ENCODE measurements at regions of chr7 and their contacts with region 1.

Region 1: GRCh38 chr7:38796626-38797501 is 112.1 kb downstream of the VPS41 start:
- DNase-seq: no peak
- H3K4me3 ChIP-seq: no peak overlapping the region
- H3K27ac ChIP-seq: no peak overlapping the region
- H3K4me1 ChIP-seq: no peaks in the 10 kb centered on the region
- H3K27me3 ChIP-seq: no peaks in the 10 kb centered on the region
- CTCF ChIP-seq: peak; percentile 81

Region 2: DNA sequence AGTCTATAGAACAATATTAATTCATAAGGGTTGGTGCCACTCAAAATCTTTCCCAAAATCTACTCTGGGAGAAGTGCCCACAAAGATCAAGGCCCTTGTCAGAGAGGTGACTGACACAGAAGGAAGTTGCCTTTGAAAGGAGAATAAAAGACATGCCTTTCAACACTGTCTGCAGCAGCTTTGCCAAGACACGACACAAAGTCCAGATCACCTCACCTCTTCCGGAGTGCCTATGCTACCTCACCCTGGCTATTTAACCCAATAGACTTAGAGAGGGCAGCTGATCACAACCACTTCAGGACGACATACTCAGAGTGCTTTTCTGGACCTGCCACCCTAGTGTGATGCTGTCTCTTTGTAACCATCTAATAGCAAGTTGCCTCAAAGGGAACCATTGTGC is 720.4 kb after region 1 on chr7:
- intact Hi-C with region 1: loop called (anchors 5 kb)
- DNase-seq: no peak
- H3K4me3 ChIP-seq: no peak overlapping the region
- H3K27ac ChIP-seq: no peak overlapping the region
- H3K4me1 ChIP-seq: no peaks in the 10 kb centered on the region
- H3K27me3 ChIP-seq: peaks cover 22% of the 10 kb centered on the region
- CTCF ChIP-seq: no peak

Measured in left ventricle myocardium inferior (tissue), 1 donor.